H1 (cell line): ENCODE measurements at regions of chr6 and their contacts with region 1.

Region 1: GRCh38 chr6:41039060-41039998 is at the start of gene UNC5CL:
- DNase-seq: peak in 1 of 2 experiments; percentile 84
- H3K4me3 ChIP-seq: no peak within 1 kb of the TSS
- H3K27ac ChIP-seq: no peak within 1 kb of the TSS
- H3K4me1 ChIP-seq: peaks cover 0 to 4% (median 3%) of the 10 kb centered on the region in 4 experiments; a peak in 6 of 7 replicates
- H3K27me3 ChIP-seq: no peaks in the 10 kb centered on the region
- CTCF ChIP-seq: peak; percentile 83 to 89 (median 85)
- EP300 ChIP-seq: no peak
- POLR2A ChIP-seq: no peak
- RAD21 ChIP-seq: peak; percentile 76 to 80
- total RNA-seq, gene UNC5CL: 1.3 and 1.4 TPM in 2 replicates

Region 2: GRCh38 chr6:40887079-40887791 is 152.1 kb before region 1 on chr6:
- CTCF ChIA-PET with region 1: interaction called, 14 read pairs
- POLR2A ChIA-PET with region 1: no interaction called
- DNase-seq: no peak
- H3K4me3 ChIP-seq: no peak overlapping the region
- H3K27ac ChIP-seq: no peak overlapping the region
- H3K4me1 ChIP-seq: no peaks in the 10 kb centered on the region
- H3K27me3 ChIP-seq: no peaks in the 10 kb centered on the region
- CTCF ChIP-seq: peak in 1 of 3 experiments; percentile 28; a peak in 1 of 4 replicates
- EP300 ChIP-seq: no peak
- POLR2A ChIP-seq: no peak
- RAD21 ChIP-seq: no peak; a peak in 1 of 4 replicates

Region 3: DNA sequence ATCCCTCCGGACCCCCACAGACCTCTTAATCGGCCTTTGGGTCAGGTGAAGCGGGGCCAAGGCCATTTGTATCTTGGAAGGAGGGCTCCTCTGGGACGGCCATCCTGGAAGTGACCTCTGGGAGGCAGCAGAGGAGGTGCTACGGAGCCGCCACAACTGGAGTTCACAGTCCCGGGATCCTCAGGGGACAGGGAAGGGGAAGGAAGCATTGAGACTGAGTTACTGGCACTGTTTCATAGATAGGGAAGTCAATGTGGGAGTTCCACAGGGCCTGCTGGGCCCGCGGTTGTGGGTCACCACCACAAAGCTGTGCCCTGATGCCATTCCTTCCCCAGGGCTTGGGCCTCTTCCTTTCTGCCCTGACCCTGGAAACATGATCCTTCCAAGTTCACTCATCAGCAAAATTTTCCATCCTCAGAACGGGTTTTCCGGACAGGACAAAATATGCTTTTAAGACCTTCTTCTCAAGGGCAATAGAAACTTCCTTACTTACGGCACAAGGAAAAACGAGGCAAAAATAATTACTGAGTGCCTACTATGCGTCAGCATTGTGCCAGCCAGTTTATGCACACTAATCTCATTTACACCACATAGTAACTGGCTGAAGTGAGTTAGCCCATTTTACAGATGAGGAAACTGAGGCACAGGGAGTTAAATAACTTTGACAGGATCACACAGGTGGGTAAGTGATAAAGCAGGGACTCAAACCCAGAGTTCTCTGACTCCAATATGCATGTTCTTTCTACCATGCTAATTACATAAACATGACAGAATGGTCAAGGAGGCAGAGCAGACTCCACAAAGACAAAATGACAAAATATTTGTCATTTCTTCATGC is 144.1 kb before region 1 on chr6:
- CTCF ChIA-PET with region 1: interaction called, 17 read pairs
- POLR2A ChIA-PET with region 1: no interaction called
- DNase-seq: peak; percentile 46 to 85
- H3K4me3 ChIP-seq: no peak overlapping the region
- H3K27ac ChIP-seq: no peak overlapping the region
- H3K4me1 ChIP-seq: no peaks in the 10 kb centered on the region
- H3K27me3 ChIP-seq: no peaks in the 10 kb centered on the region; a peak in 2 of 7 replicates
- CTCF ChIP-seq: peak; percentile 81 to 91 (median 83)
- EP300 ChIP-seq: no peak
- POLR2A ChIP-seq: no peak
- RAD21 ChIP-seq: peak; percentile 94 to 95

Region 4: GRCh38 chr6:40912158-40912946 is 127.0 kb before region 1 on chr6:
- CTCF ChIA-PET with region 1: interaction called, 12 read pairs
- POLR2A ChIA-PET with region 1: no interaction called
- DNase-seq: peak in 1 of 2 experiments; percentile 17
- H3K4me3 ChIP-seq: no peak overlapping the region
- H3K27ac ChIP-seq: no peak overlapping the region
- H3K4me1 ChIP-seq: no peaks in the 10 kb centered on the region
- H3K27me3 ChIP-seq: peaks cover 0 to 1% (median 0%) of the 10 kb centered on the region in 4 experiments; a peak in 2 of 7 replicates
- CTCF ChIP-seq: peak; percentile 61 to 78 (median 67)
- EP300 ChIP-seq: no peak
- POLR2A ChIP-seq: no peak
- RAD21 ChIP-seq: peak; percentile 63 to 78

Region 5: DNA sequence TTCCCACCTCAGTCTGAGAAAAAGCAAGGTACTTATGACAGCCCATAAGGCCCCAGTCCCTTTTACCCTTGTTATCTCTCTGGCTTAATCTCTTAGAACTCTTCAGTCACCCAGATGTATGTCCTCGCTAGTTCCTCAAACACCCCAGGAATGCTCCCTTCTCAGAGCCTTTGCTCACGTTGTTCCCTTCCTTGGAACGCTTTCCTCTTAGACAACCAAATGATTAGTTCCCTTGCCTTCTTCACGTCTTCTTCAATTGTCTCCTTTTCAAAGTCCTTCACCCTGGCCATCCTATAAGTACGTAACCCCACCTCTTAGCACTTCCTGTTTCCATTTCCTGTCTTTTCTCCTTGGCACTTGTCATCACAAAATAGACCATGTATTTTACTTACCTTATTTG is 12.5 kb after region 1 on chr6:
- CTCF ChIA-PET with region 1: interaction called, 48 read pairs
- POLR2A ChIA-PET with region 1: interaction called, 6 read pairs
- DNase-seq: no peak
- H3K4me3 ChIP-seq: no peak overlapping the region
- H3K27ac ChIP-seq: no peak overlapping the region
- H3K4me1 ChIP-seq: peaks cover 0 to 5% (median 0%) of the 10 kb centered on the region in 4 experiments; a peak in 2 of 7 replicates
- H3K27me3 ChIP-seq: no peaks in the 10 kb centered on the region
- CTCF ChIP-seq: no peak
- EP300 ChIP-seq: no peak
- POLR2A ChIP-seq: no peak
- RAD21 ChIP-seq: no peak

Region 6: DNA sequence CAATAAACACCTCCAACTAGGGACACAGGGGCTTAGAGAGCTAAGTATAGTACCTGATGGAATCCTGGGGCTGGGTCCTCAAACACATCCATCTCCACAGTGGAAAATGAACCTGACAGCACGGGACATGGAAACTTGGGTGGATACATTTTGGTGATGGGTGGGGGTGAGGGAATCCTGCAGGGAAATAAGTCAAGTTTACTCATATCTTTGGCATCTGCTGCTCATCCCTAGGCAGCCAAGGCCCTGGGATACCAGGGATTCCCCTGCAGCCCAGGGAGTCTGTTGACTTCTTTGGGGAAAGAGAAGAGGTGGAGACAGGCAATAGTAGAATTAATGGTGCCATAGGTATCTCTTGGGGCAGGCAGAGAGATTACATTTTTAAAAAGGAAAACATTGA is 20.2 kb after region 1 on chr6:
- CTCF ChIA-PET with region 1: interaction called, 48 read pairs
- POLR2A ChIA-PET with region 1: no interaction called
- DNase-seq: no peak
- H3K4me3 ChIP-seq: no peak overlapping the region
- H3K27ac ChIP-seq: no peak overlapping the region
- H3K4me1 ChIP-seq: no peaks in the 10 kb centered on the region; a peak in 1 of 7 replicates
- H3K27me3 ChIP-seq: no peaks in the 10 kb centered on the region
- CTCF ChIP-seq: no peak
- EP300 ChIP-seq: no peak
- POLR2A ChIP-seq: no peak
- RAD21 ChIP-seq: no peak

Region 7: GRCh38 chr6:41066867-41067304 is 27.6 kb after region 1 on chr6:
- CTCF ChIA-PET with region 1: interaction called, 14 read pairs
- POLR2A ChIA-PET with region 1: interaction called, 3 read pairs
- DNase-seq: peak in 1 of 2 experiments; percentile 70
- H3K4me3 ChIP-seq: no peak overlapping the region
- H3K27ac ChIP-seq: no peak overlapping the region
- H3K4me1 ChIP-seq: peaks cover 0 to 4% (median 1%) of the 10 kb centered on the region in 4 experiments; a peak in 2 of 7 replicates
- H3K27me3 ChIP-seq: no peaks in the 10 kb centered on the region
- CTCF ChIP-seq: peak in 2 of 3 experiments; percentile 54 to 79; a peak in 2 of 4 replicates
- EP300 ChIP-seq: no peak
- POLR2A ChIP-seq: no peak
- RAD21 ChIP-seq: peak; percentile 72 to 77